ENCODE measurements at regions of chr11 and their contacts with region 1.

Region 1: DNA sequence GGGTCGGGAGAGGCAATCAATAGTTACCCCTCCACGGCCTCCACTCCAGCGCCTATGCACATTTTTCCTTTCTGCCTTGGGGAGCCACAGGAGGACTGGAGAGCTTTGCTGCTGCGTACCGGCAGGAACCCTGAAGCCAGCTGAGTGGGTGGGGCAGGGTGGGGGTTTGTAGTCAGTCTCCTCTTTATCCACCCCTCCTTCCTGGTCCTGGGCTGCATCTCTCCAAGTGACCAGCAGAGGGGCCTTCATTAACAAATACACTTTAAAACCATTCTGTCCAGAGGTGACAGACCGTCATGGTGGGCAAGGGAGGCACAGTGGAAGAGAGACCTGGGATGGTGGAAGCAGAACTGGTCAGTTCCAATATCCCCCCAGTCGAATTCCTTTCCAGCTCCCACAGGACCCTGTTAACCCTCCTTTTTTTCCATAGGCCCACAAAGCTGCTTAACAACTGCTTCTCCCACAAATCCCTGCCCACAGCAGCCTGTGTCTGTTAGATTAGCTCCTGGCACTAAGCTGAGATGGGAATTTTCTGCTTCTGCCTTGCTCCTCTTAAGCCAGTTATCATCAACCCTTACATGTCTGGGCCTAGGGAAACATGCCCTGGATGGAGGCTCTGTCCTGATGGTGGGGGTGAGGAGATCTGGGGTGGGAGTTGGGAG is 3.9 kb upstream of the ABCG4 start:
- DNase-seq: peak; percentile 83
- ATAC-seq: peak; percentile 89
- H3K4me3 ChIP-seq: no peak overlapping the region; the same call in 1 of the 2 replicates
- H3K27ac ChIP-seq: no peak overlapping the region
- H3K4me1 ChIP-seq: 0 out of 2 replicates have a peak, but pooled peaks cover 3% of the 10 kb centered on the region
- H3K27me3 ChIP-seq: no peaks in the 10 kb centered on the region
- CTCF ChIP-seq: peak; percentile 63

Region 2: DNA sequence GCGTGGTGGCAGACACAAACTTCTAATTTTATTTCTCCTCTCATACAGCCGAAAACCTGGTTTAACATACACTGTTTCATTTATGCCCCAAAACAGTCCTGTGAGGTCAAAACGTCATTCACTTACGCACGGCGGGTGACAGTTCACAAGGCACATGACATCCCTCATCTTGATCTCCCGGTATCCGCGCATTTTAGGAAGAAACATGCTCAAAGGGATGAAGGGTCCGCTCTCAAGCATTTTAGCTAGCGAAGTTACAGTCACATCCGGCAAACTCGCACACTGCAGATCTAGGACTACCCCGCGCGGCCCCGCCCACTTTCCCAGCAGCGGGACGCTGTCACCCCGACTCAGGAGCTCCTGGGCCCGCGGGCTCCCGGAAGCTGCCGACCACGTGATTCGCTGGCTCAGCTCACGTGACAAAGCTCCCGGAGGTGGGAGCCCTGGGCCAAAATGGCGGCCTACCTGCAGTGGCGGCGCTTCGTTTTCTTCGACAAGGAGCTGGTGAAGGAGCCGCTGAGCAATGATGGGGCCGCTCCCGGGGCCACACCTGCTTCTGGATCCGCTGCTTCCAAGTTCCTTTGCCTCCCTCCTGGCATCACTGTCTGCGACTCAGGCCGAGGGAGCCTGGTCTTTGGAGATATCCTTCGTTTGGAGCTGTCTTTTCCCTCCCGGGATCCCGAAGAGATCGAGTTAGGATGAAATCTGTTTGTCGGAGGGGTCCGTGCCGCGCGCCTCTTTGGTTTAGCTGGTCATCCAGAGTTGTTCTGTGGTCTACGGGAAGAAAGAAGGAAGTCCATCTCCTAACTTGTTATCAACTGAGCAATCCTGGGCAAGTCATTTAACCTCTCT is 77.4 kb before region 1 on chr11 and contains the start of gene VPS11:
- CTCF ChIA-PET with region 1: no interaction called
- POLR2A ChIA-PET with region 1: no interaction called
- intact Hi-C with region 1: no loop called
- DNase-seq: peak; percentile 99
- ATAC-seq: peak; percentile 98
- H3K4me3 ChIP-seq: peak within 1 kb of the TSS; percentile 87
- H3K27ac ChIP-seq: peak within 1 kb of the TSS; percentile 43
- H3K4me1 ChIP-seq: peaks cover 14% of the 10 kb centered on the region; the same call in 1 of the 2 replicates
- H3K27me3 ChIP-seq: no peaks in the 10 kb centered on the region
- CTCF ChIP-seq: no peak
- total RNA-seq, gene VPS11: 48.3 and 48.7 TPM in 2 replicates

Region 3: DNA sequence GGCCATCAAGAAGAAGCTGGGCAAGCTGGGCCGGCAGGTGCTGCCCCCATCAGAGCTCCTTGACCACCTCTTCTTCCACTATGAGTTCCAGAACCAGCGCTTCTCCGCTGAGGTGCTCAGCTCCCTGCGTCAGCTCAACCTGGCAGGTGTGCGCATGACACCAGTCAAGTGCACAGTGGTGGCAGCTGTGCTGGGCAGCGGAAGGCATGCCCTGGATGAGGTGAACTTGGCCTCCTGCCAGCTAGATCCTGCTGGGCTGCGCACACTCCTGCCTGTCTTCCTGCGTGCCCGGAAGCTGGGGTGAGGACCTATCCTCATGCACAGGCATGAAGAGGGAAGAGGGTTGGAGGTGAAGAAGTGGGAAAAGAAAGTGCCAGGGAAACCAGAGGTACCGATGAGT is 35.0 kb after region 1 on chr11:
- CTCF ChIA-PET with region 1: no interaction called
- POLR2A ChIA-PET with region 1: no interaction called
- intact Hi-C with region 1: no loop called
- DNase-seq: no peak
- ATAC-seq: no peak
- H3K4me3 ChIP-seq: no peak overlapping the region
- H3K27ac ChIP-seq: no peak overlapping the region
- H3K4me1 ChIP-seq: peaks cover 8% of the 10 kb centered on the region
- H3K27me3 ChIP-seq: no peaks in the 10 kb centered on the region
- CTCF ChIP-seq: no peak

Region 4: DNA sequence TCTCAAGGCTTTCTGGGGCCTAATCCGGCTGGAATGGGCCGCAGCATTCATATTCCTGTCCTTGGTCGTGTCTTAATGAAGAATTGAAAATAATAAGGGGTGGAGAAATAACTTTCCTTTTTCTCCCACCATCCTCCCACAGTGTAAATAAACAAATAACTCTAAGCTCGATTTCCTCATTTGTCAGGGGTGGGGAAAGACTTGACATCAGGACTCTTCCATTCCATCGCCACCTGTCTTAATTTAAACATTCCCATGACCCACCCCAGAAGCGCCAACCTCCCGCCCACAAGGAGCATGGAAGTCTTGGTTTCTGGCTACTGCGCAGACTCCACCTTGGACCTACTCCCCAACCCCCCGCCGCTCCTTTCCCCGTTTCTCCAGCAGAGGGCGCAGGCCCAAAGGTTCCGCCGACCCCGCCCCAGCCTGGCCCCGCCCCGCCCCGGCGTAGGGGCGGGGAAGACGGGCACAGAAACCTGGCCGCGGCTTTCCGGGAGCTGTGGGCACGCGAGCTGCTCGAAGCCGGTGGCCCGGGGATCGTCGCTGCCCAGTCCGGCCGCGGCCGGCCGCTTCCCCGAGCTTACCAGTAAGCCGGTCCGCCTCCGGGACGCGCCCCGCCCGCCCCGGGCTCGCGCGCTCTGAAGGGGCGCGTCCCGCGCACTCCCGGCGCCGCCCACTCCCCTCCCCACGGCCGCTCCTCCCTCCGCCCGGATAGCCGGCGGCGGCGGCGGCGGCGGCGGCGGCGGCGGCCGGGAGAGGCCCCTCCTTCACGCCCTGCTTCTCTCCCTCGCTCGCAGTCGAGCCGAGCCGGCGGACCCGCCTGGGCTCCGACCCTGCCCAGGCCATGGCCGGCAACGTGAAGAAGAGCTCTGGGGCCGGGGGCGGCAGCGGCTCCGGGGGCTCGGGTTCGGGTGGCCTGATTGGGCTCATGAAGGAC is 60.9 kb after region 1 on chr11 and contains the start of gene CBL:
- CTCF ChIA-PET with region 1: no interaction called
- POLR2A ChIA-PET with region 1: no interaction called
- intact Hi-C with region 1: no loop called
- DNase-seq: peak; percentile 96
- ATAC-seq: peak; percentile 86
- H3K4me3 ChIP-seq: peak within 1 kb of the TSS; percentile 99
- H3K27ac ChIP-seq: peak within 1 kb of the TSS; percentile 58
- H3K4me1 ChIP-seq: peaks cover 18% of the 10 kb centered on the region
- H3K27me3 ChIP-seq: no peaks in the 10 kb centered on the region
- CTCF ChIP-seq: peak; percentile 88
- total RNA-seq, gene CBL: 11.4 and 15.3 TPM in 2 replicates

Region 5: DNA sequence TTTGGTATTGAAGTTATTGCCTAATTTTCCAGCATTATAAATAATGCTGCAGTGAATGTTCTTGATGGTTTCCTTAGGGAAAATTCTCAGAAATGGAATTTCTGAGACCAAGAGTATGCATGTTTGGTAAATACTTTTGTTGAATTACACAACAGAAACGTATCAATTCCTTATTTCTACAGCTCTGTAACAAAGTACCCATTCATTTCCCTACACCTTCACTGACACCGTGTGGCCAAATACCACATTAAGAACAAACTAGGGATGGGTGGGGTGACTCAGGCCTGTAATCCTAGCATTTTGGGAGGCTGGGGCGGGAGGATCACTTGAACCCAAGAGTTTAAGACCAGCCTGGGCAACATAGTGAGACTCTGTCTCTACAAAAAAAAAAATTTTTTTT is 150.2 kb after region 1 on chr11:
- CTCF ChIA-PET with region 1: no interaction called
- POLR2A ChIA-PET with region 1: interaction called, 4 read pairs
- intact Hi-C with region 1: loop called (anchors 10 kb)
- DNase-seq: peak; percentile 69
- ATAC-seq: peak; percentile 91
- H3K4me3 ChIP-seq: no peak overlapping the region
- H3K27ac ChIP-seq: no peak overlapping the region
- H3K4me1 ChIP-seq: no peaks in the 10 kb centered on the region
- H3K27me3 ChIP-seq: no peaks in the 10 kb centered on the region
- CTCF ChIP-seq: peak; percentile 54

Region 6: GRCh38 chr11:119709638-119710346 is 564.8 kb after region 1 on chr11:
- CTCF ChIA-PET with region 1: no interaction called
- POLR2A ChIA-PET with region 1: no interaction called
- intact Hi-C with region 1: no loop called
- DNase-seq: no peak
- ATAC-seq: no peak
- H3K4me3 ChIP-seq: no peak overlapping the region
- H3K27ac ChIP-seq: no peak overlapping the region
- H3K4me1 ChIP-seq: no peaks in the 10 kb centered on the region; the same call in 1 of the 2 replicates
- H3K27me3 ChIP-seq: no peaks in the 10 kb centered on the region
- CTCF ChIP-seq: no peak

Measured in PC-3 (cell line).